ENCODE measurements at regions of chr10 and their contacts with region 1.

Region 1: GRCh38 chr10:26725837-26726727 is 28.6 kb downstream of the PDSS1 start:
- DNase-seq: peak in 1 of 2 experiments; percentile 5
- H3K4me3 ChIP-seq: no peak overlapping the region
- H3K27ac ChIP-seq: no peak overlapping the region
- H3K4me1 ChIP-seq: no peaks in the 10 kb centered on the region
- H3K27me3 ChIP-seq: no peaks in the 10 kb centered on the region
- CTCF ChIP-seq: peak; percentile 38 to 69 (median 60)
- EP300 ChIP-seq: no peak
- POLR2A ChIP-seq: no peak
- RAD21 ChIP-seq: peak; percentile 79 to 81

Region 2: DNA sequence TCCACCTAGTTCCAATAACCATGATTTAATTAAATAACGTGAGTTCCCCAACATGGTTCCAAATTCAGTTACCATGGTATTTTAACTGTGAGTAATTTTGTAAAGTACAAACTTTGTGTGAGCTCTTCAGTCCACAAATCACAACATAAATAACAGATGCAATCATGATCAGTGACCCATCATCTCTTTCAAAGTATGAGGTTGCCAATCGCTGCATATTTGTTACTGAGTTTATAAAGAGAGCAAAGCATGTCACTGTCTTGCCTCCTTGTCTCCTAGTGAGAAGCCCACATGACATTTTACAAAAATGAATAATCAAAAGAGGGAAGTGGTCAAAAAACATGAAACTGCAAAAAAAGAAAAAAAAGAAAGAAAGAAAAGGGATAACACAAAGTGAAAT is 97.7 kb before region 1 on chr10:
- CTCF ChIA-PET with region 1: no interaction called
- POLR2A ChIA-PET with region 1: no interaction called
- DNase-seq: no peak
- H3K4me3 ChIP-seq: no peak overlapping the region
- H3K27ac ChIP-seq: no peak overlapping the region
- H3K4me1 ChIP-seq: no peaks in the 10 kb centered on the region
- H3K27me3 ChIP-seq: no peaks in the 10 kb centered on the region
- CTCF ChIP-seq: no peak
- EP300 ChIP-seq: no peak
- POLR2A ChIP-seq: no peak
- RAD21 ChIP-seq: no peak

Region 3: GRCh38 chr10:26714415-26715136 is 11.5 kb before region 1 on chr10:
- CTCF ChIA-PET with region 1: interaction called, 19 read pairs
- POLR2A ChIA-PET with region 1: no interaction called
- DNase-seq: no peak
- H3K4me3 ChIP-seq: no peak overlapping the region
- H3K27ac ChIP-seq: no peak overlapping the region
- H3K4me1 ChIP-seq: no peaks in the 10 kb centered on the region
- H3K27me3 ChIP-seq: no peaks in the 10 kb centered on the region
- CTCF ChIP-seq: no peak
- EP300 ChIP-seq: no peak
- POLR2A ChIP-seq: no peak
- RAD21 ChIP-seq: no peak

Region 4: GRCh38 chr10:26755443-26755903 is 29.4 kb after region 1 on chr10:
- CTCF ChIA-PET with region 1: interaction called, 15 read pairs
- POLR2A ChIA-PET with region 1: no interaction called
- DNase-seq: no peak
- H3K4me3 ChIP-seq: peak overlapping the region in 1 of 4 experiments; percentile 33; a peak in 1 of 8 replicates
- H3K27ac ChIP-seq: no peak overlapping the region
- H3K4me1 ChIP-seq: peaks cover 0 to 9% (median 2%) of the 10 kb centered on the region in 4 experiments; a peak in 3 of 7 replicates
- H3K27me3 ChIP-seq: no peaks in the 10 kb centered on the region
- CTCF ChIP-seq: no peak
- EP300 ChIP-seq: no peak
- POLR2A ChIP-seq: no peak
- RAD21 ChIP-seq: no peak

Region 5: GRCh38 chr10:26869528-26869927 is 143.4 kb after region 1 on chr10:
- CTCF ChIA-PET with region 1: interaction called, 147 read pairs
- POLR2A ChIA-PET with region 1: no interaction called
- DNase-seq: no peak
- H3K4me3 ChIP-seq: no peak overlapping the region
- H3K27ac ChIP-seq: no peak overlapping the region
- H3K4me1 ChIP-seq: no peaks in the 10 kb centered on the region
- H3K27me3 ChIP-seq: no peaks in the 10 kb centered on the region
- CTCF ChIP-seq: no peak
- EP300 ChIP-seq: no peak
- POLR2A ChIP-seq: no peak
- RAD21 ChIP-seq: no peak

Region 6: DNA sequence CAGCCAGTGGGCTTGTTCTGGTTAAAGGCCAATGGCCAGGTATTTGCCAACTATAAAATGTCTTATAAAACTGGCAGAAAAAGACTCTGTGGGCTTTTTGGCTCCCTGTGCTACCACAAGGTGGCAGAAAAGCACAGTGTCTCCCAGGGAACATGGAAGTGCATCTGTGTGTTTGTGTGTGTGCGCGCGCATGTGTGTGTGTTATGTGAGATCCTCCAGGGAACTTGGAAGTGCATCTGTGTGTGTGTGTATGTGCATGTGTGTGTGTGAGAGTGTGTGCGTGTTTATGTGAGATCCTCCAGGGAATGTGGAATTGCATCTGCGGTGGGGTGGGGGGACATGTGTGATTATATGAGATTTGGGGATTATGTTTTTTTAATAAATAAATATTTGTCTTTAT is 164.9 kb after region 1 on chr10:
- CTCF ChIA-PET with region 1: interaction called, 16 read pairs
- POLR2A ChIA-PET with region 1: no interaction called
- DNase-seq: peak in 1 of 2 experiments; percentile 66
- H3K4me3 ChIP-seq: no peak overlapping the region
- H3K27ac ChIP-seq: no peak overlapping the region
- H3K4me1 ChIP-seq: no peaks in the 10 kb centered on the region
- H3K27me3 ChIP-seq: no peaks in the 10 kb centered on the region
- CTCF ChIP-seq: peak; percentile 50 to 77 (median 71)
- EP300 ChIP-seq: no peak
- POLR2A ChIP-seq: no peak
- RAD21 ChIP-seq: peak; percentile 80 to 85

Region 7: DNA sequence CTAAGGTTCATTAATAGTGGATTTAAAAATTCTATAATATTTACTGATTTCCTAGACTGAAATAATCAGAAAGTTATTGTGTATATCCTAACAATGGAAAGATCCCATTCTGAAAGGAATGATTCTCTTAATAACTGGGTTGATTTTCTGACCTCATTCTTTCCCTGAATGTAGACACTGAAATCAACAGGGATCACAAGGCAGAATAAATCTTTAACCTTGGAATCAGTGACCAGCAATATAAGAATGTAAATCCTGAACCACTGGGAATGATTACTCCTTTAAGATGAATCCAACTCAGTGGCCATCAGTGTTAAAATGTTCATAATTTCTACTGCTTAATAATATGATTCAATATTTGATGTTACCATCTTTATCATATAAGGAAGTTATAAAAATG is 326.6 kb after region 1 on chr10:
- CTCF ChIA-PET with region 1: no interaction called
- POLR2A ChIA-PET with region 1: no interaction called
- DNase-seq: no peak
- H3K4me3 ChIP-seq: no peak overlapping the region
- H3K27ac ChIP-seq: no peak overlapping the region
- H3K4me1 ChIP-seq: no peaks in the 10 kb centered on the region
- H3K27me3 ChIP-seq: no peaks in the 10 kb centered on the region
- CTCF ChIP-seq: no peak
- EP300 ChIP-seq: no peak
- POLR2A ChIP-seq: no peak
- RAD21 ChIP-seq: no peak

Region 8: GRCh38 chr10:27065084-27065483 is 339.0 kb after region 1 on chr10:
- CTCF ChIA-PET with region 1: no interaction called
- POLR2A ChIA-PET with region 1: no interaction called
- DNase-seq: no peak
- H3K4me3 ChIP-seq: no peak overlapping the region
- H3K27ac ChIP-seq: no peak overlapping the region
- H3K4me1 ChIP-seq: no peaks in the 10 kb centered on the region
- H3K27me3 ChIP-seq: no peaks in the 10 kb centered on the region
- CTCF ChIP-seq: no peak
- EP300 ChIP-seq: no peak
- POLR2A ChIP-seq: no peak
- RAD21 ChIP-seq: no peak

Measured in H1 (cell line).